Activated CD8-positive, alpha-beta T cell treated with anti-CD3 and anti-CD28 coated beads for 36 hours (primary cell): ENCODE measurements at regions of chr1 and their contacts with region 1.

Region 1: GRCh38 chr1:44213222-44214112 is at the start of gene DMAP1:
- DNase-seq: peak; percentile 88
- ATAC-seq: peak; percentile 90
- H3K4me3 Mint-ChIP-seq: peak within 1 kb of the TSS; percentile 93
- H3K27ac Mint-ChIP-seq: peak within 1 kb of the TSS; percentile 92
- H3K4me1 Mint-ChIP-seq: peaks cover 28% of the 10 kb centered on the region
- H3K27me3 Mint-ChIP-seq: no peaks in the 10 kb centered on the region
- CTCF ChIP-seq: no peak
- total RNA-seq, gene DMAP1: 26.5 to 29.6 TPM

Region 2: GRCh38 chr1:44227211-44227610 is 13.7 kb after region 1 on chr1:
- CTCF ChIA-PET with region 1: interaction called, 20 read pairs
- POLR2A ChIA-PET with region 1: interaction called, 3 read pairs
- intact Hi-C with region 1: no loop called
- DNase-seq: no peak
- ATAC-seq: no peak
- H3K4me3 Mint-ChIP-seq: no peak overlapping the region
- H3K27ac Mint-ChIP-seq: no peak overlapping the region
- H3K4me1 Mint-ChIP-seq: peaks cover 13% of the 10 kb centered on the region
- H3K27me3 Mint-ChIP-seq: no peaks in the 10 kb centered on the region
- CTCF ChIP-seq: no peak

Region 3: GRCh38 chr1:44237721-44238457 is 24.4 kb after region 1 on chr1:
- CTCF ChIA-PET with region 1: interaction called, 25 read pairs
- POLR2A ChIA-PET with region 1: interaction called, 5 read pairs
- intact Hi-C with region 1: no loop called
- DNase-seq: peak; percentile 75
- ATAC-seq: peak; percentile 99
- H3K4me3 Mint-ChIP-seq: no peak overlapping the region
- H3K27ac Mint-ChIP-seq: no peak overlapping the region
- H3K4me1 Mint-ChIP-seq: peaks cover 10% of the 10 kb centered on the region
- H3K27me3 Mint-ChIP-seq: no peaks in the 10 kb centered on the region
- CTCF ChIP-seq: peak; percentile 70

Region 4: GRCh38 chr1:44256762-44257554 is 43.5 kb after region 1 on chr1:
- CTCF ChIA-PET with region 1: interaction called, 11 read pairs
- POLR2A ChIA-PET with region 1: no interaction called
- intact Hi-C with region 1: no loop called
- DNase-seq: no peak
- ATAC-seq: no peak
- H3K4me3 Mint-ChIP-seq: no peak overlapping the region
- H3K27ac Mint-ChIP-seq: no peak overlapping the region
- H3K4me1 Mint-ChIP-seq: no peaks in the 10 kb centered on the region
- H3K27me3 Mint-ChIP-seq: no peaks in the 10 kb centered on the region
- CTCF ChIP-seq: no peak

Region 5: DNA sequence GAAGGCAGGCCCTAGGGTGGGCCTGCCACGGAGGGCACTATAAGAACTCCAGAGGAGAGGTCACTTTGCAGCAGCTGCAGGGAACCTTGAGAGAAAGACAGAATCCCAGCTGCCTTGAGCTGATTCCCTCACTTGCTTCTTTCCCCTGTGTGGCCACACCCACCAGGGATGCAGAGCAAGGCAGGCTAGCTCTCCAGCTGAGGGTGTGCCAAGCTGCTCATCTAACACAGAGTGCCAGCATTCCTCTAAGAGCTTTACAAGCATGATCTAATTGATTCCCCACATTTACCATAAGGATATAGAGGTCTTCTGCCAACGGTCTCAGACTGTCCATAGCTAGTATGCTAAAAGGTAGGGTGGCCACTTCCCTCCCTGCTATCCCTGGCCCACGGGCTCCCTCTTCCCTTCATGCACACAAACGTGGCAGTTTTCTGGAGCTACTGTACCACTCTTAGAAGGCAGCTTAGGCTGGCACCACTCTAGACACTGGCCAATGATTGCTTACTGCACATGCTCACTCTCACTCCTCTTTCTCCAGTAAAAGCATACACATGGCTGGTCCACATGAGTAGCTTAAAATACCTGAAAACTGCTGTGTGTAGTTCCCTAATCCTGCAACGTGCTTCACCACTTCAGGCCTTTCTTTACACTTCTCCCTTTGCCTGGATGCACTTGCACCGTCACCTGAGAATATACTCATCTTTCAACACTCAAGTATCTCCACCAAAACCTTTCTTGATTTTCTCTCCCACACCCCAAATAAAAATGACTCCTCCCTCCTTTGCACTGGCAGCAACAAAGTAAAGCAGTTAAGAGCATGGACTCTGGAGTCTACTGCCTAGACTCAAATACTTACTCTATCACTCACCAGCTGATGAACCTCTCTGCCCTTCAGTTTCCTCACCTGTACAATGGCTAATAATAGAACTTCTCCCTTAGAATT is 57.5 kb after region 1 on chr1:
- CTCF ChIA-PET with region 1: interaction called, 16 read pairs
- POLR2A ChIA-PET with region 1: no interaction called
- intact Hi-C with region 1: no loop called
- DNase-seq: no peak
- ATAC-seq: no peak
- H3K4me3 Mint-ChIP-seq: no peak overlapping the region
- H3K27ac Mint-ChIP-seq: no peak overlapping the region
- H3K4me1 Mint-ChIP-seq: peaks cover 16% of the 10 kb centered on the region
- H3K27me3 Mint-ChIP-seq: no peaks in the 10 kb centered on the region
- CTCF ChIP-seq: no peak

Region 6: GRCh38 chr1:44318097-44319088 is 104.9 kb after region 1 on chr1:
- CTCF ChIA-PET with region 1: interaction called, 61 read pairs
- POLR2A ChIA-PET with region 1: interaction called, 3 read pairs
- intact Hi-C with region 1: loop called (anchors 2 kb)
- DNase-seq: peak; percentile 61
- ATAC-seq: no peak
- H3K4me3 Mint-ChIP-seq: no peak overlapping the region
- H3K27ac Mint-ChIP-seq: no peak overlapping the region
- H3K4me1 Mint-ChIP-seq: no peaks in the 10 kb centered on the region
- H3K27me3 Mint-ChIP-seq: no peaks in the 10 kb centered on the region
- CTCF ChIP-seq: peak; percentile 97

Region 7: GRCh38 chr1:44594871-44595746 is 381.6 kb after region 1 on chr1:
- CTCF ChIA-PET with region 1: interaction called, 8 read pairs
- POLR2A ChIA-PET with region 1: no interaction called
- intact Hi-C with region 1: loop called (anchors 10 kb)
- DNase-seq: peak; percentile 85
- ATAC-seq: peak; percentile 97
- H3K4me3 Mint-ChIP-seq: no peak overlapping the region
- H3K27ac Mint-ChIP-seq: no peak overlapping the region
- H3K4me1 Mint-ChIP-seq: no peaks in the 10 kb centered on the region
- H3K27me3 Mint-ChIP-seq: no peaks in the 10 kb centered on the region
- CTCF ChIP-seq: peak; percentile 98